ENCODE measurements at regions of chr1 and their contacts with region 1.

Region 1: GRCh38 chr1:100351095-100351891 is 1.0 kb upstream of the CDC14A start:
- DNase-seq: peak; percentile 93
- H3K4me3 ChIP-seq: peak overlapping the region; percentile 96
- H3K27ac ChIP-seq: peak overlapping the region; percentile 66
- H3K4me1 ChIP-seq: peaks cover 24% of the 10 kb centered on the region
- CTCF ChIP-seq: peak; percentile 74

Region 2: DNA sequence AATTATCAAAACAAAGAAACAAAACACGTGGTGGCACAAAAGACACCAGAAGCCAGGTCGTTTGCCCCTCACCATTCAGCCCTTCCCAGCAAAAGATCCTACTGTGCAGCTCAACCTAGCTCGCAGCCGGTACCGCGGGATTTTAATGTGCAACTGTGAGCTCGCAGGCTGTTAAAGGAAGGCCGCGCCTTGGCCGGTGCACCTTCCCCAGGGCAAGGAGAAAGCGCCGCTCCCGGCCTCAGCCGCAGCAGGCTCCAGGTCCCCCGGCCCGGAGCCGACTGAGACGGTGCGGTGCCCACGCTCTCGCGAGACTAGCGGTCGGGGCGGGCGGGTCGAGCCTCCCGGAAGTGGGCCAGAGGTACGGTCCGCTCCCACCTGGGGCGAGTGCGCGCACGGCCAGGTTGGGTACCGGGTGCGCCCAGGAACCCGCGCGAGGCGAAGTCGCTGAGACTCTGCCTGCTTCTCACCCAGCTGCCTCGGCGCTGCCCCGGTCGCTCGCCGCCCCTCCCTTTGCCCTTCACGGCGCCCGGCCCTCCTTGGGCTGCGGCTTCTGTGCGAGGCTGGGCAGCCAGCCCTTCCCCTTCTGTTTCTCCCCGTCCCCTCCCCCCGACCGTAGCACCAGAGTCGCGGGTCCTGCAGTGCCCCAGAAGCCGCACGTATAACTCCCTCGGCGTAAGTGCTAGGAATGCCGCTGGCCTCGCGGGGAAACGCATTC is 501.4 kb before region 1 on chr1 and contains the start of gene AGL:
- CTCF ChIA-PET with region 1: no interaction called
- POLR2A ChIA-PET with region 1: no interaction called
- intact Hi-C with region 1: loop called (anchors 2 kb)
- DNase-seq: peak; percentile 93
- H3K4me3 ChIP-seq: peak within 1 kb of the TSS; percentile 81
- H3K27ac ChIP-seq: peak within 1 kb of the TSS; percentile 56
- H3K4me1 ChIP-seq: peaks cover 30% of the 10 kb centered on the region
- CTCF ChIP-seq: no peak
- total RNA-seq, gene AGL: 11.6 and 12.2 TPM in 2 replicates

Region 3: DNA sequence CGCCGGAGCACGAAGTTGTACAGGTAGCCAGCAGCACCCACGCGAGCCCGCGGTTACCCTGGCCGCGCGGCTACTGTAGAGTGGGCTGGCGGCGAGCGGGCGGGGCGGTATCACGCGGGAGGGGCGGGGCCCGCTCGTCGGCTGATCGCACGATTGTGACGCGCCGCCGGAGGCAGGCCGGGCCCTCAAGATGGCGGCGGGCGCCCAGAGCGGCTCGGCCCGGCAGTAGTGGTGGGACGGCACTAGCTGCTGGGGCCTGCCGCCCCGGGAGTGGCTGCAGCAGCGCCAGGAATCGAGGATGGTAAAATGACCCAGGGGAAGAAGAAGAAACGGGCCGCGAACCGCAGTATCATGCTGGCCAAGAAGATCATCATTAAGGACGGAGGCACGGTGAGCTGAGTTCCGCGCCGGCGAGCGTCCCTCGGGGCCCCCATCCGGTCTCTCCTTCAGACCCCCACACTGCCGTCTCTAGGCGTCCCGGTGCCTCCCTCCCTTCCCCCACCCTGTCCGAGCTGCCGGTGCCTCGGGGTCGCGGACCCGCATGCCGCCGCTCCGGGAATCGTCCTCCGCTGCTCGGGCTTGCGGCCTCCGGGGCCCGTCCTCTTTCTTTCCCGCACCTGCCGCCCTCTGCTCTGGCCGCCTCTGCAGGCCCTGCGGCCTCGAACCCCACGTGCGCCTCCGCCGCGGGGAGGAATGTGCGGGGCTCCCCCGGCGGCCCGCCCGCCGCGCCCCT is 313.2 kb before region 1 on chr1:
- CTCF ChIA-PET with region 1: no interaction called
- POLR2A ChIA-PET with region 1: interaction called, 3 read pairs
- intact Hi-C with region 1: loop called (anchors 2 kb)
- DNase-seq: peak; percentile 90
- H3K4me3 ChIP-seq: peak overlapping the region; percentile 78
- H3K27ac ChIP-seq: peak overlapping the region; percentile 84
- H3K4me1 ChIP-seq: peaks cover 50% of the 10 kb centered on the region
- CTCF ChIP-seq: no peak

Region 4: GRCh38 chr1:100188617-100189016 is 162.7 kb before region 1 on chr1:
- CTCF ChIA-PET with region 1: no interaction called
- POLR2A ChIA-PET with region 1: no interaction called
- intact Hi-C with region 1: no loop called
- DNase-seq: no peak
- H3K4me3 ChIP-seq: no peak overlapping the region
- H3K27ac ChIP-seq: no peak overlapping the region
- H3K4me1 ChIP-seq: peaks cover 11% of the 10 kb centered on the region
- CTCF ChIP-seq: no peak

Region 5: DNA sequence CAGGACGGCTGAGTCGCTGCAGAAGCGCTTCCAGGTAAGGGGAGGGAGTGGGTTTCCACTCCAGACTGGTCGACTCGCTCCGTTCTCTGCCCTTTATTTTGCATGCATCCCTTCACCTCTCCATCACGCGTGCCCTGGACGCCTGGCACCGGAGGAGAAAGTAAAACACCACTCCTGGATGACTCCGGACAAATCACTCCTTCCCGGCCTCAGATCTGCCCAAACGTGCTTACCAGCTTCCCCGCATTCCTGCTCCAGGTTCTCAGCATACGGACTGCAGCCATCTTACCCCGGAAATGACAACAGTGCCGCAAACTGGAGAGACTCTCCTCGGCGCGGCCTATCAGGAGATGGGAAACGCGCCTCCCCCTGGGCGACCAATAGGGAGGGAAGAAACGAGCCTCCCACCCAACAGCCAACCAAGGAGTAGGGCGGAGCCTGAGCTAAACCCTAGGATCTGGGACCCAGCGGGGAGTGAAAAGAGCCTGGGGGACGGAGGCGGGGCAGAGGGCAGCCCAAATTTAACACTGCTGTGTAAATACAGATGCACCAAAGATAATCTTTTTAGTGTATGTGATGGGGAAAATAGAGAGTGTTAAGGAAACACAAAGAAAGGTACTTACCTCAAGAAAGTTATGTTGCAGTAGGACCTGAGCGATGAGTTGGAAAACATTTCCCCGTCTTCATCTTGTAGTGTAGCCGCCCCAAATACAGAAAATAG is 101.6 kb before region 1 on chr1 and contains the start of gene DBT:
- CTCF ChIA-PET with region 1: no interaction called
- POLR2A ChIA-PET with region 1: no interaction called
- intact Hi-C with region 1: loop called (anchors 5 kb)
- DNase-seq: peak; percentile 95
- H3K4me3 ChIP-seq: peak within 1 kb of the TSS; percentile 74
- H3K27ac ChIP-seq: peak within 1 kb of the TSS; percentile 4
- H3K4me1 ChIP-seq: peaks cover 14% of the 10 kb centered on the region
- CTCF ChIP-seq: no peak
- total RNA-seq, gene DBT: 1.8 and 3.3 TPM in 2 replicates

Region 6: DNA sequence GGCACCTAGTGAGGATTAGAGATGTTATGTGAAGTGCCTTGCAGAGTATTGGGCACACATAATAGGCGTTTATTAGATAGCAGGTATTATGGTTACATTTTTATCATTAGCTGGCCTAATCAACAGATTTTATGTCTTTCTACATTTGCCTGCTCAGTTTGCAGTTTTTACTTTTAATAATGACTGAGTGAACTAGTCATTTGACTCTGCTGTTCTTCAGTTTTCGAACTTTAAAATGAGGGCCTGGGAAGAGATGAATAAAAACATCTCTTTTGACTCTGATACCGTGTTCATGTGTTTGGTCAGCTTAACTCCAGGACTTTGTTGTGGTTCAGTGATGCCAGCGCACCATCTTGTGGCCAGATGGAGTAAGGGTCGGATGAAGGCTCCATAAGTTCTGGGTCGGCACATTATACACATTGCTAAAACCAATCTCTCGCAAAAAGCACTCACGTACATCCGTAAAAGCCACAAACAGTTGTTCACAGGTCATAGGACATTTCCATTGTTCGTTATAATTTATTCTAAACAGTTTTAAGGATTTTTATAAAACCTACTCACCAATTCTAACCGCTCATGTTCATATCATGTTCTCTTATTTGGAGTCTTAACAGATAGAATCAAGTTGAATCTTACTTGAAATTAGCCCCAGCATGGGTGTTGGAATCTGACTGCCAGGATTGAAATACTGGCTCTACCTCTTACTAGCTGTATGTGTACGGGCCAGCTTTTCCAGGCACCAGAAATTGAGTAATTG is 108.2 kb after region 1 on chr1:
- CTCF ChIA-PET with region 1: no interaction called
- POLR2A ChIA-PET with region 1: no interaction called
- intact Hi-C with region 1: loop called (anchors 2 kb)
- DNase-seq: peak; percentile 74
- H3K4me3 ChIP-seq: no peak overlapping the region
- H3K27ac ChIP-seq: no peak overlapping the region
- H3K4me1 ChIP-seq: peaks cover 8% of the 10 kb centered on the region
- CTCF ChIP-seq: peak; percentile 97

Region 7: DNA sequence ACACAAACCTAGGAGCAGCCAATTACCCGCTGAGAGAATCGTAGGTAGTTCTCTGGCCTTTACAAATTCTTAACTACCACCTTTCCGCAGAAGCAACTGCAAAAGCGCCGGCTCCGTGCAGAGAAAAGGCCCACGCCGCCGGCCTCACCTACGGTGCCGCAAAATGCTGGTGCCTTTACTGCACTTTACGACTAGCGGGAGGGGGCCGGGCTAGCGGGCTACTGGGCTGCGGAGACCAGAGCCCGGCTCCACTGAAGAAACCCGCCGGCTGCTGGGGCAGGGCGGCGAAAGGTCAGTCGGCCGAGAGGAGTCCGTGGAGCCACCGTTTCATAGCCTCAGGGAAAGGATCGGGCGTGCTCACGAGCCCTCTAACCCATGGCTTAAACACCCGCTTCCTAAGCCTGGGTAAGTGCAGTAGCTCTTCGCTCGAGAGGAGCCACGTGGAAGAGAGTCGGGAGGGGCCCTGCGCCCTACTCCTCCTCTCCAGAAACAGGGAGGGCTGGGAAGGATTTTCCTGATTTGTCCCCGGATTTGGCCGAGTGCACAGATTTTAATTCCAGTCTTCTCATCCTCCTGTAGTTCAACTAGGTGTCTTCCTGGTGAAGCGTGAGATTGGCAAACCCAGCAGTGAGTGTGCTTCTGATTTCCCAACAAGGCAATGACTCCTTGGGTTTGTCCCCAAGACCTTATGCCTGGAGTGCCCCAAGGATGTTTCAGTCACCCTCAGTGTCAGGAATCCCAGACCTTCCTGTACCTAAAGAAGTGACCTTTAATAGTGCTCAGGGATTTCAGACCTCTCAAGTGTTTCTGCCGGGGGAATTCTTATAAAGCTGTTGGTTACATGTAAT is 674.6 kb after region 1 on chr1 and contains the start of gene DPH5:
- CTCF ChIA-PET with region 1: no interaction called
- POLR2A ChIA-PET with region 1: no interaction called
- intact Hi-C with region 1: loop called (anchors 5 kb)
- DNase-seq: peak; percentile 92
- H3K4me3 ChIP-seq: peak within 1 kb of the TSS; percentile 78
- H3K27ac ChIP-seq: peak within 1 kb of the TSS; percentile 23
- H3K4me1 ChIP-seq: peaks cover 41% of the 10 kb centered on the region
- CTCF ChIP-seq: no peak
- total RNA-seq, gene DPH5: 19.4 and 20.3 TPM in 2 replicates

Measured in OCI-LY7 (cell line).